CD4-positive, alpha-beta T cell (primary cell): ENCODE measurements at regions of chr3 and their contacts with region 1.

Region 1: DNA sequence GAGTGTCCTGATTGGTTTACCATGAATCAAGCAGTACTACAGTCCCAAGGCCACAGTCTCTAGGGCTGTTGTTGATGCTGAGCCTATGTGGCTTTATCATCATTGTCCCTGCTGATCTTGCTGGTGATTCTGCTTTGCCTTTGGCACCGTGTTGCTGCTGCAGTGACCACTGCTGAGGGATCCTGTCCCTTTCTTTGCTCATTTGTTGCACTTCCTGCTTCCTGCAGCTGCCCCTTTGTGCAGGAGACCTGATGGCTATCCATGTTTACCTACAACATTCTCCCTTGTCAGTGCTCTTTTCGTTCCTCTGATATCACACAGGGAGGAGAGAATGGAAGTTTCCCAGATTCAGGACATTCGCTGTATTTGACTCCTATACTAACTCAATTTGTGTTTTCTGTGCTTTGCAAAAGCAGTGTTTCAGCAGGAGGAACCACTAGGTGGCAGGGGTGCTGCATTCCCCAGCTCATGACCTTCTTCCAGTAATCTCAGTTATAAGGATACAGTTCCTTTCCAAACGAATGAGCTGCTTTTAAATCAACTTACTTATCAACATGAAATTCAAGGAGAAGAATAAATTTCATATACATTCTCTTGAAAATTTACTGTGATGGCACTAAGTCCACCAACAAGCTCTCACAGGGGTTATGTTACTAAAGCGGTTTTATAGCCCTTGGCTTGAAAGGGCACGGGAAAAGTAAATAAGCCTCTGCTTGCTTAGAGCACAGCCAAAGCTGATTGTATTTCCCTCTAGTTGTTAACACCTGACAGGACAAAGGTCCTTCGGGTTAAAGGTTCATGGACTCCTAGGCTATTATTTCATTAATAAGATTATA is 9.7 kb upstream of the THUMPD3 start:
- DNase-seq: peak; percentile 21 to 80 (median 52)
- ATAC-seq: peak; percentile 77
- H3K4me3 ChIP-seq: no peak overlapping the region
- H3K4me3 Mint-ChIP-seq: no peak overlapping the region
- H3K27ac ChIP-seq: no peak overlapping the region
- H3K27ac Mint-ChIP-seq: no peak overlapping the region
- H3K4me1 ChIP-seq: peaks cover 13% of the 10 kb centered on the region
- H3K4me1 Mint-ChIP-seq: peaks cover 4% of the 10 kb centered on the region
- H3K27me3 ChIP-seq: no peaks in the 10 kb centered on the region
- H3K27me3 Mint-ChIP-seq: no peaks in the 10 kb centered on the region
- CTCF ChIP-seq: peak; percentile 92

Region 2: GRCh38 chr3:9422712-9423424 is 69.7 kb after region 1 on chr3:
- CTCF ChIA-PET with region 1: interaction called, 12 read pairs
- POLR2A ChIA-PET with region 1: no interaction called
- intact Hi-C with region 1: loop called (anchors 1 to 2 kb)
- DNase-seq: peak in 3 of 14 experiments; percentile 55 to 70 (median 64)
- ATAC-seq: peak; percentile 96
- H3K4me3 ChIP-seq: no peak overlapping the region
- H3K4me3 Mint-ChIP-seq: no peak overlapping the region
- H3K27ac ChIP-seq: peak overlapping the region; percentile 3 to 5
- H3K27ac Mint-ChIP-seq: peak overlapping the region; percentile 77
- H3K4me1 ChIP-seq: peaks cover 7% of the 10 kb centered on the region
- H3K4me1 Mint-ChIP-seq: peaks cover 60% of the 10 kb centered on the region
- H3K27me3 ChIP-seq: no peaks in the 10 kb centered on the region
- H3K27me3 Mint-ChIP-seq: no peaks in the 10 kb centered on the region
- CTCF ChIP-seq: peak; percentile 65

Region 3: GRCh38 chr3:9503283-9503682 is 150.1 kb after region 1 on chr3:
- CTCF ChIA-PET with region 1: no interaction called
- POLR2A ChIA-PET with region 1: no interaction called
- intact Hi-C with region 1: loop called in 1 of 2 experiments (anchors 5 kb)
- DNase-seq: peak; percentile 48 to 79 (median 62)
- ATAC-seq: peak; percentile 58
- H3K4me3 ChIP-seq: no peak overlapping the region
- H3K4me3 Mint-ChIP-seq: no peak overlapping the region
- H3K27ac ChIP-seq: no peak overlapping the region
- H3K27ac Mint-ChIP-seq: no peak overlapping the region
- H3K4me1 ChIP-seq: peaks cover 11% of the 10 kb centered on the region
- H3K4me1 Mint-ChIP-seq: no peaks in the 10 kb centered on the region
- H3K27me3 ChIP-seq: peaks cover 34% of the 10 kb centered on the region in 2 experiments
- H3K27me3 Mint-ChIP-seq: peaks cover 48% of the 10 kb centered on the region
- CTCF ChIP-seq: peak; percentile 81